ENCODE measurements at regions of chr7 and their contacts with region 1.

Region 1: DNA sequence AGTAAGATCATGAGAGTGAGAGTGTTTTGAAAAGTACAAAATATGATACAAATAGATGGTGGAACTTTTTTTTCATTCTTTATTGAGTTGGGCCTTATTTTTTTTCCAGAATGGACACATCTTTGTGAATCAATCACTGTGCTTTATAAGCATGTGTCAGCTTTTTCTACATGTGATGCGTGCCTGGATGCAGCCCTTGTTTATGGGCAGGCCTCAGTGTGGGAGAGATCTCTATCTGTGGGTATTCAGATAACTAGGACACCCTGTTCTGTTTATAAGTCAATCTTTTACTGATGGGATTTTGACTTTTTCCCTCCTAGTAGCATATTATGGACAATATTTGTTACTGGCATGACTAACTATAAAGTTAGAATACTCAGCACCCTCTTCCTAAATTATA is 42.9 kb upstream of the IKZF1 start:
- DNase-seq: no peak
- ATAC-seq: no peak
- H3K4me3 ChIP-seq: peak overlapping the region; percentile 17
- H3K4me3 Mint-ChIP-seq: peak overlapping the region; percentile 54 to 99 (median 72)
- H3K27ac ChIP-seq: peak overlapping the region; percentile 66
- H3K27ac Mint-ChIP-seq: peak overlapping the region; percentile 87 to 99 (median 94)
- H3K4me1 ChIP-seq: peaks cover 68 to 72% of the 10 kb centered on the region in 2 donors
- H3K4me1 Mint-ChIP-seq: peaks cover 51 to 94% (median 86%) of the 10 kb centered on the region in 7 donors
- H3K27me3 ChIP-seq: no peaks in the 10 kb centered on the region
- H3K27me3 Mint-ChIP-seq: no peaks in the 10 kb centered on the region

Region 2: GRCh38 chr7:50142425-50143017 is 119.1 kb before region 1 on chr7:
- CTCF ChIA-PET with region 1: no interaction called
- POLR2A ChIA-PET with region 1: no interaction called
- intact Hi-C with region 1: no loop called
- DNase-seq: peak in 7 of 9 donors; percentile 43 to 72 (median 62)
- ATAC-seq: peak; percentile 83
- H3K4me3 ChIP-seq: no peak overlapping the region
- H3K4me3 Mint-ChIP-seq: peak overlapping the region in 9 of 10 donors; percentile 13 to 86 (median 64)
- H3K27ac ChIP-seq: peak overlapping the region; percentile 55
- H3K27ac Mint-ChIP-seq: peak overlapping the region in 8 of 9 donors; percentile 16 to 91 (median 62)
- H3K4me1 ChIP-seq: peaks cover 3% of the 10 kb centered on the region in 2 donors
- H3K4me1 Mint-ChIP-seq: peaks cover 0 to 37% (median 12%) of the 10 kb centered on the region in 7 donors
- H3K27me3 ChIP-seq: no peaks in the 10 kb centered on the region
- H3K27me3 Mint-ChIP-seq: peaks cover 0 to 18% (median 0%) of the 10 kb centered on the region in 5 donors

Region 3: DNA sequence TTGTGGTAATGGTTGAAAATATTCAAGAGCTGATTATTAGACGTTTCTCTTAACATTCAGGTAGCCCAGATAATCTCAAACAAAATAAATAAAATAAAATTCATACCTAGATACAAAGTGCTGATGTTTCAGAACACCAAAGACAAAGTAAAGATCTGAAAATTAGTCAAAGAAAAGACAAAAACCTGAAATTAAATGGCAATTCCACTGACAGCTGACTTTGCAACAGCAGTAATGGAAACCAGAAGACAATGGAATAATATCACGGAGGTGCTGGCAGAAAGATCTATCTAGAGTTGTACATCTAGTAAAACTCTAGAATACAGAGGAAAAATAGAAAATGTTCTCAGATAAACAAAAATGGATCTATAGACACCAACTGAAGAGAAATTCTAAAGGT is 15.0 kb before region 1 on chr7:
- CTCF ChIA-PET with region 1: interaction called, 3 read pairs
- POLR2A ChIA-PET with region 1: interaction called, 21 read pairs
- intact Hi-C with region 1: loop called (anchors 2 kb)
- DNase-seq: no peak
- ATAC-seq: no peak
- H3K4me3 ChIP-seq: no peak overlapping the region
- H3K4me3 Mint-ChIP-seq: no peak overlapping the region
- H3K27ac ChIP-seq: no peak overlapping the region
- H3K27ac Mint-ChIP-seq: peak overlapping the region in 1 of 9 donors; percentile 14
- H3K4me1 ChIP-seq: no peaks in the 10 kb centered on the region
- H3K4me1 Mint-ChIP-seq: peaks cover 0 to 33% (median 21%) of the 10 kb centered on the region in 7 donors
- H3K27me3 ChIP-seq: no peaks in the 10 kb centered on the region
- H3K27me3 Mint-ChIP-seq: no peaks in the 10 kb centered on the region

Region 4: DNA sequence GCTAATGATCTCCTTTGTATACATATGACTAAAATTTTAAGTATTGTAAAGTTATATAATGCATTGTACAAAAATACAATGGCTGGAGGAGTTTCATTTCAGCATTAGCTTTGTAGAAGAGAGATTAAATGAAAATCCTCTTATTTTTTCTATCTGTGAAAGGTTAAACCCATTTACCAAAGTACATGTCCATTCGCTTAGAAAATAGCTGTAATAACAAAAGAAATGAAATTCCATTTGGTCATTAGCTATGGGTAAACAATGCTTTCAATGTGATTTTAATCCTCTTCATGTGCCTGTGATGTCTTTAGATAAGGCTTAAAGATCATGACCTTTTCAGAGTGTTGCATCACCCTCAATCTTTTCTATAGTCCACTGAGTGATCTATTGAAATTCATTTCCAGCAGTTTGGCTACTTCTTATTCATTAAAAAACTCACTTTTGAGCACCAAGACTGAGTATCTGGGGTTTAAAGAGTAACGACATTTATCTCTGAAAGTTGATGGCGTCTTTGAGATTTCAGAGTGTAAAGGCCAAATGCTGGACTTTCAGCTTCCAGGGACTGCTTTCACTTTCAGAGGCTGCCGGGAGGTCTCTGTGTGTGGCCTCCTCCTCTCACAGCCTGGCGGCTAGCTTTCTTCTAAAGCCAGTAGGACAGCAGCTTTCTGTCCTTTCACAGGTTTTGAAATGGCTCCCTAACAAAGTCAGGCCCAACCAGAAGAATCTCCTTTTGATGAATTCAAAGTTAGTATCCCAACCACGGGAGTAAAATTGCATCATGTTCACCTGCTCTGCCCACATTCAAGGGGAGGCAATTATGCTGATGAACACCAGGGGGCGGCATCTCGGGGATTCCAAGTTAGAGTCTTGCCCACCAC is 1756.4 kb after region 1 on chr7:
- CTCF ChIA-PET with region 1: no interaction called
- POLR2A ChIA-PET with region 1: no interaction called
- intact Hi-C with region 1: no loop called
- DNase-seq: no peak
- ATAC-seq: no peak
- H3K4me3 ChIP-seq: no peak overlapping the region
- H3K4me3 Mint-ChIP-seq: peak overlapping the region in 3 of 10 donors; percentile 14 to 35 (median 32)
- H3K27ac ChIP-seq: no peak overlapping the region
- H3K27ac Mint-ChIP-seq: no peak overlapping the region
- H3K4me1 ChIP-seq: no peaks in the 10 kb centered on the region
- H3K4me1 Mint-ChIP-seq: no peaks in the 10 kb centered on the region
- H3K27me3 ChIP-seq: no peaks in the 10 kb centered on the region
- H3K27me3 Mint-ChIP-seq: no peaks in the 10 kb centered on the region